Posterior vena cava (tissue), 2 donors: ENCODE measurements at regions of chr16 and their contacts with region 1.

Region 1: GRCh38 chr16:27449434-27450195 is 47.6 kb downstream of the IL21R start:
- DNase-seq: no peak

Region 2: DNA sequence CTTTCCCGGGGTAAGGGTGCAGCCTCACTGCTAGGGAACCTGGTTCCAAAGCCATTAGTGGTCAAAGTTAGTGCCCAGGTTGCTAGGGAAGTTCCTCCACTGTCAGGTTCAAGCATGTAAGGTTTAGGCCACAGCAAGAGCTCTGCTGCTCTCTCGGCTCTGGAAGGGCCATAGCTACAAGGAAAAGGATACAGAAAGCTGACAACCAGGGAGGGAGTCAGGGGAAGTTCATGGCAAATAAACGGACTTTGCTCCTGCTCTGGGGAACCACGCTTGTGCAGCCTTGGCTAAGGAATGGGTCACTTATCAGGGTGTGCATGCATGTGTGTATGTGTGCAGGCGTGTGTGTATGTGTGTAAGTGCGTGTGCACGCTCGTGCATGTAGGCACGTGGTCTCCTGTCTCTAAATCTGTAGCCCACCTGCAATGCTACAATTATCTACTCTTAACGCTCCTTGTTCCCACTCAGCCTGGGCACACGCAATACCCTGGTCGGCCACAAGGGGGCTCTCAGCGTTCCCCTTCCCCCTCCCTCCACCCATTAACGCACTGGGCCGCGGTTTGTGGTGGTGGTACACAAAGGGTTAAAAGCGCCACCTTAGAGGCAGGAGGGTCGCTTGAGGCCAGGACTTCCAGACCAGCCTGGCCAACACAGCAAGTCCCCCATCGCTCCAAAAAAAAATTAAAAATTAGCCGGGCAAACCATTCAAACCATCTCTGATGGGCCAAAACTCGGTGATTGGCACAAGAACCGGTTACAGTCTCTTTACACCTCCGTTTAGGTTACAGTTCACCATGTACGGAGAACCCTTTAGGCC is 294.7 kb before region 1 on chr16:
- intact Hi-C with region 1: loop called in 1 of 2 experiments (anchors 10 kb)
- DNase-seq: peak; percentile 89

Region 3: GRCh38 chr16:27179500-27180072 is 270.0 kb before region 1 on chr16:
- intact Hi-C with region 1: loop called in 1 of 2 experiments (anchors 10 kb)
- DNase-seq: peak; percentile 96

Region 4: DNA sequence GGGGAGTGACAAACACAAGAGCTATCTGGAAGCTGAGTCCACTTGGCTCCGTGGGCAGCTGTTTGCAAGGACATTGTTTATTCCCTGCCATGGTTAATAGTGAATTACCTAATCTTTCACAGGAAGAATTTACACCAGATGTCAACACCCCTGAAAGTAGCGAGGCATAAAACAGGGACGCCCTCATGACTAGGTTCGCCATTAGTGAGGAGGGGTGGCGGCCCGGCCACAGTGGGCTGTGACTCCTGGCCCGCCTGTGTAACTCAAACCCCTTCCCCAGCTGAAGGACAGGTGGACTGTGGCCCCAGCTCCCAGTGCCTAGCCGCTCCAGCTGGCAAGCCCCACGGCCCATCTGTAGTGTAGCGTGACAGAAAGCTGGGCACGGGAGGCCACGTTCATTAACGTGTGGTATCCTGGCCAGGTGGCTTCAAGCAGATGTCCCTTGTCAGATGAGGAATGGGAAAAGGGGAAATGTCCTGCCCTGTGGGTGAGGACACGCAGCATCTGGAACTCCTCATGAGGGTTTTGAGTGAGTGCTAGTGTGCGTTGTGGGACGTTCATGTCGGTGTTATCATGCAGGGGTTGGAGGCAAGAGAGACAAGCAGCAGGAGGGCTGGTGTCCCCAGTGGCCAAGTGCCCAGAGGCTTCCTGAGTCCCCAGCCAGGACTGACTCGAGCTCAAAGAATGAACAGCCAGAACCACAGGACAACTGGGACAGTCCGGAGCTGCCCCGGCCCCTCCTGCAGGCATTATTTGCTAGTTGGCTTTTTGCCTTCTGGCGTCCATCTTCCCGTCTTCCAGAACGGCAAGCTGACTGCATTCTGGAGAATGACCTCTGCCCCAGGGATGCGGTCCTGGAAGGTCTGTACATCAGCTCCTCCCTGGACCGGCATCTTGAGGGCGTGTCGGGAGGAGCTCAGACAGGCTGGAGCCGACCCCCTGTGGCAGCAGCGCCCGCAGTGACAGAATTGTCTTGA is 227.1 kb before region 1 on chr16:
- intact Hi-C with region 1: loop called in 1 of 2 experiments (anchors 10 kb)
- DNase-seq: no peak

Region 5: DNA sequence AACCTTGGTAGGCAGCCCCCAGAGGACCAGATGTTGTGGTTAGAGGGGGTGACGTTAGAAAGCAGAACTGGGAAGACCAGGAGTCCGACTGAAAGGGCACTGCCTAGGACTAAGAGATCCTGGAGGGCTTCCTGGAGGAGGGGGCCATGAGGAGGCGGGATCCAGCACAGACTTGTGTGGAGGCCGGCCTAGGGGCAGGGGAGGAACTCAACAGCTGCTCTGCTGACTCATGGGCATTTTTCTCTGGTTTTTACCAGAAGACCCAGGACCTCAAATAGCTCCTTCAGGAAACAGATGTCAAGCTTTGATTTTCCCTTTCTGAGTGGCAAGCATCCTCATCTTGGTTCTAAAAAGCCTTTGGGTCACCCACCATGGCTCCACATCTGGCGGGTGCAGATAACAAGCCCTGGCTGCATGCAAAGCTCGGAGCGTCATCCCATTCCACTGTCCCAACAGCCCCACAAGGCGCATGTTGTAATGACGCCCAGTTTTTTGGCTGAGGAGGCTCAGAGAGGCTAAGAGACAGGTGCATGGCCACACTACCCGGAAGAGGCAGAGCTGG is 18.6 kb before region 1 on chr16:
- intact Hi-C with region 1: no loop called
- DNase-seq: no peak